PC-9 (cell line): ENCODE measurements at regions of chr3 and their contacts with region 1.

Region 1: GRCh38 chr3:46488735-46489361 is 8.9 kb upstream of the RTP3 start:
- DNase-seq: peak; percentile 77 to 94
- H3K4me3 ChIP-seq: no peak overlapping the region
- H3K27ac ChIP-seq: no peak overlapping the region
- H3K4me1 ChIP-seq: 0 out of 2 replicates have a peak, but pooled peaks cover 4% of the 10 kb centered on the region
- H3K27me3 ChIP-seq: no peaks in the 10 kb centered on the region
- CTCF ChIP-seq: peak; percentile 94

Region 2: GRCh38 chr3:46449755-46450552 is 38.9 kb before region 1 on chr3:
- CTCF ChIA-PET with region 1: interaction called, 15 read pairs
- POLR2A ChIA-PET with region 1: interaction called, 13 read pairs
- intact Hi-C with region 1: no loop called
- DNase-seq: no peak
- H3K4me3 ChIP-seq: no peak overlapping the region
- H3K27ac ChIP-seq: no peak overlapping the region
- H3K4me1 ChIP-seq: no peaks in the 10 kb centered on the region
- H3K27me3 ChIP-seq: no peaks in the 10 kb centered on the region
- CTCF ChIP-seq: peak; percentile 72

Region 3: DNA sequence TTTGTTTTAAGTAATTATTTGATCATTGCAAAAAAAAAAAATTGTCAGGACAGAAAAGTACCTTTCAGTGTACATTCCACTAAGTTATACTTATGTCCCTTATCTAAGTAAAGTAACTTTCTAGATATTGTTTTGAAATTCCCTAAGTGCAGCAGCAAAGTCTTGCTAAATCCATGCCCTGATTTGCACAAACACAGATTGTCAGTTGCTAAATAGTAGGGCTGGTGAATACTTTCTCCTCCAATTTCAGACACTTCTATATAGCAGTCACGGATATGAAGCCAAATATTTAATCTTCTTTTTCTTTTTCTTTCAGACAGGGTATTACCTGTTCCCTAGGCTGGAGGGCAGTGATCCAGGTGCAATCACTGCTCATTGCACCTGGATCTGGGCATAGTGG is 64.3 kb after region 1 on chr3:
- CTCF ChIA-PET with region 1: interaction called, 46 read pairs
- POLR2A ChIA-PET with region 1: interaction called, 10 read pairs
- intact Hi-C with region 1: loop called (anchors 1 kb)
- DNase-seq: no peak
- H3K4me3 ChIP-seq: no peak overlapping the region
- H3K27ac ChIP-seq: no peak overlapping the region
- H3K4me1 ChIP-seq: no peaks in the 10 kb centered on the region
- H3K27me3 ChIP-seq: no peaks in the 10 kb centered on the region
- CTCF ChIP-seq: no peak

Region 4: DNA sequence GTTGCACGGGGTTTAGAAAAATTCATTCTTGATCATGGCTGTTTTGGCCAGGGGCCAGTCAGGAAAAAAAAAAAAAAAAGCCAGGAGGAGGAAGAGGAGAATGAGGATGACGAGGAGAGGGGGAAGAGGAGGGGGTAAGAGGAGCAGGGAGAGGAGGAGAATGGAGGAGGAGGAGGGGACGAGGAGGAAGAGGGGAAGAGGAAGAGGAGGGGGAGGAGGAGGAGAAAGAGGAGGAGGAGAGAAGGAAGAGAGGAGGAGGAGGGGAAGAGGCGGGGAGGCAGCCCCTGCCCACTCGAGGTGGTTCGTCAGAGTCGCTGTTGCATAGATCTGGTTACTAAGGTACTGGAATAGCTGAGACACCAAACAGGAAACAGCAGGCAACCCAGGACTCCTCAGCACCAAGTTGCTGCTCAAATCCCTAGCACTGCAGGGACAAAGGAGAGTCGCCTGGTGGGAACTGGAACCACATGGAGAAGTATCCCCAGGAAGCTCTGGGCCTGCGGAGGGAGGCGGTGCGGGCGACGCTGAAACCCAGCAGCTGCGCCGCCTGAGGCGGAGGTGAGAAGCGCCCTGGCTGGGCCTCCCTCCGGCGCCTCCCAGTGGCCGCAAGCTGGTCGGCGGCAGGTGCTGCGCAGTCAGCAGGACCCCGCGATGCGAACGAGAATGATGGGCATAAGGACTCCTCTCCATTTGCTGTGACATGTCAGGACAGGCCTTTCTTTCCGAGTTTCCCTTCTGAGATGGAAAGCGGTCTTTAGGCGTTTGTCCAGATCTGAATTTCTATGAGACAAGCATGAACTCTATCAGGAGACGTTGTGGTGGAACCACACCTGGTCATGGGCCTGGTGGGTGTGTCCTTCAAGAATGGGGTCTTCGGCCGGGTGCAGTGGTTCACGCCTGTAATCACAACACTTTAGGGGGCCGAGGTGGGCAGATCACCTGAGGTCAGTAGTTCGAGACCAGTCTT is 141.0 kb after region 1 on chr3:
- CTCF ChIA-PET with region 1: interaction called, 20 read pairs
- POLR2A ChIA-PET with region 1: no interaction called
- intact Hi-C with region 1: loop called (anchors 1 kb)
- DNase-seq: peak; percentile 57 to 77
- H3K4me3 ChIP-seq: peak overlapping the region; percentile 7; the same call in 1 of the 2 replicates
- H3K27ac ChIP-seq: no peak overlapping the region
- H3K4me1 ChIP-seq: no peaks in the 10 kb centered on the region
- H3K27me3 ChIP-seq: no peaks in the 10 kb centered on the region
- CTCF ChIP-seq: peak; percentile 71

Region 5: GRCh38 chr3:46909535-46910442 is 420.9 kb after region 1 on chr3:
- CTCF ChIA-PET with region 1: interaction called, 4 read pairs
- POLR2A ChIA-PET with region 1: no interaction called
- intact Hi-C with region 1: loop called (anchors 5 kb)
- DNase-seq: peak; percentile 38 to 79
- H3K4me3 ChIP-seq: no peak overlapping the region
- H3K27ac ChIP-seq: no peak overlapping the region
- H3K4me1 ChIP-seq: no peaks in the 10 kb centered on the region
- H3K27me3 ChIP-seq: no peaks in the 10 kb centered on the region
- CTCF ChIP-seq: peak; percentile 88